ENCODE measurements at regions of chr1 and their contacts with region 1.

Region 1: GRCh38 chr1:201254625-201255506 is 28.4 kb upstream of the PKP1 start:
- DNase-seq: no peak
- H3K4me3 ChIP-seq: no peak overlapping the region
- H3K27ac ChIP-seq: no peak overlapping the region
- H3K4me1 ChIP-seq: peaks cover 0 to 6% (median 4%) of the 10 kb centered on the region in 4 donors
- H3K27me3 ChIP-seq: peaks cover 6 to 20% (median 12%) of the 10 kb centered on the region in 3 donors
- CTCF ChIP-seq: peak; percentile 81 to 96 (median 94)
- EP300 ChIP-seq: no peak
- POLR2A ChIP-seq: no peak

Region 2: DNA sequence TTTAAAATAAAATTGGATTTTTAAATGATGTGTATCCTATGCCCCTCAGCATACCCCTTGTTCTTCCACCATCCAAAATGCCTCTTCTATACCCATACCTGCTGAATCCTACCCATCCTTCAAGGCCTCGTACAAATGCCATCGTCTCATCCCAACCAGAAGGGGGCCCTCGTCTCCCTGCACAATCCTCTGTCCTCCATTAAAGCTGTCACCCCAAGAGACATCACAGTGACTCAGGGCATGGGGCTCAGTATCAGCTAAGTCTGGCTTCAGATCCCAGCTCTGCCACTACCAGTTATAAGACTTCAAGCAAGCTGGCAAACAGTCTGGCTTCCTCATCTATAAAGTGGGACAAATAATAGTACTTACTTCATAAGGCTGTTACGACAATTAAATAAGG is 40.4 kb before region 1 on chr1:
- intact Hi-C with region 1: no loop called
- DNase-seq: no peak
- H3K4me3 ChIP-seq: no peak overlapping the region
- H3K27ac ChIP-seq: no peak overlapping the region
- H3K4me1 ChIP-seq: no peaks in the 10 kb centered on the region
- H3K27me3 ChIP-seq: no peaks in the 10 kb centered on the region
- CTCF ChIP-seq: no peak
- EP300 ChIP-seq: no peak
- POLR2A ChIP-seq: no peak

Region 3: GRCh38 chr1:201361652-201362504 is 107.0 kb after region 1 on chr1:
- intact Hi-C with region 1: loop called (anchors 1 kb)
- DNase-seq: no peak
- H3K4me3 ChIP-seq: no peak overlapping the region
- H3K27ac ChIP-seq: no peak overlapping the region
- H3K4me1 ChIP-seq: no peaks in the 10 kb centered on the region
- H3K27me3 ChIP-seq: no peaks in the 10 kb centered on the region
- CTCF ChIP-seq: peak in 3 of 4 experiments; percentile 48 to 67 (median 64)
- EP300 ChIP-seq: no peak
- POLR2A ChIP-seq: no peak

Region 4: DNA sequence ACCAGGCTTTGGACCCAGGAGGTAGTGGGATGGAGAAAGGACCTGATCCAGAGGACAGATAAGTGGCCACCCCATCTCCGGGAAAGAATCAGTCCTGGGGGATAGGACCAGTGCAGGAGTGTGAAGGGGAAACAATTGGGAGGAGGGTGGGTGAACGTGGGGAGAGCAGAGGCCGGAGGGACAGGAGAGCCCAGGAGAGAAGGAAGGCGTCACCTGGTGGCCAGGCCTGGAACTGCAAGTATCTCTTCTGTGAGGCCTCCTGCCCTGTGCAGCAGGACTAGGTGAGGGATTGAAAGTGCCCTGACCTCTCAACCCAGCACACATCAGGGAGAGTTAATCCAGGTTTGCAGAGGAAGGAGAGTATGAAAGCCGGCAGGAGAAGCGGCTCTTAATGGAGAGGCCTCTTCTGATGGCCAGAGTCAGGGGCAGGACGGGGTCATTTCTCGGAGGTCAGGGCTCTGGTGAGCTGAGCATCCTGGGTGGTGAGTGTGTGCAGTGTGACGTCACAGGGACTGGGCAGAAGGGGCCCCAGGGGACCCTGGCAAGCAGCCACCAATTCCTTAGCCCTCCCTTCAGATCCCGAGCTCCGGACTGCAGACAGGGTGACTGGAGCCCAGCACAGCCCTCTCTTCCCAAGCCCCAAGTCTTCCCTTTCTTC is 153.4 kb after region 1 on chr1:
- intact Hi-C with region 1: loop called (anchors 1 kb)
- DNase-seq: no peak
- H3K4me3 ChIP-seq: no peak overlapping the region
- H3K27ac ChIP-seq: no peak overlapping the region
- H3K4me1 ChIP-seq: no peaks in the 10 kb centered on the region
- H3K27me3 ChIP-seq: no peaks in the 10 kb centered on the region
- CTCF ChIP-seq: peak; percentile 53 to 91 (median 86)
- EP300 ChIP-seq: no peak
- POLR2A ChIP-seq: no peak